ENCODE measurements at regions of chr2 and their contacts with region 1.

Region 1: GRCh38 chr2:179129574-179130238 is 79.8 kb upstream of the CCDC141 start:
- DNase-seq: no peak
- ATAC-seq: peak; percentile 53; the same call in 1 of the 3 replicates
- H3K4me3 ChIP-seq: no peak overlapping the region
- H3K27ac ChIP-seq: no peak overlapping the region
- H3K4me1 ChIP-seq: no peaks in the 10 kb centered on the region
- H3K27me3 ChIP-seq: no peaks in the 10 kb centered on the region
- CTCF ChIP-seq: peak; percentile 65
- EP300 ChIP-seq: no peak
- POLR2A ChIP-seq: no peak
- RAD21 ChIP-seq: no peak

Region 2: GRCh38 chr2:178796079-178796677 is 333.5 kb before region 1 on chr2:
- CTCF ChIA-PET with region 1: no interaction called
- POLR2A ChIA-PET with region 1: no interaction called
- in situ Hi-C with region 1: no loop called
- intact Hi-C with region 1: loop called (anchors 2 kb)
- DNase-seq: peak; percentile 10
- ATAC-seq: no peak
- H3K4me3 ChIP-seq: no peak overlapping the region
- H3K27ac ChIP-seq: no peak overlapping the region
- H3K4me1 ChIP-seq: no peaks in the 10 kb centered on the region
- H3K27me3 ChIP-seq: peaks cover 0 to 23% of the 10 kb centered on the region in 2 experiments; a peak in 2 of 5 replicates
- CTCF ChIP-seq: peak; percentile 22; the same call in 1 of the 2 replicates
- EP300 ChIP-seq: no peak
- POLR2A ChIP-seq: no peak
- RAD21 ChIP-seq: no peak

Region 3: GRCh38 chr2:178891265-178891958 is 238.3 kb before region 1 on chr2:
- CTCF ChIA-PET with region 1: interaction called, 6 read pairs
- POLR2A ChIA-PET with region 1: no interaction called
- in situ Hi-C with region 1: no loop called
- intact Hi-C with region 1: loop called (anchors 1 kb)
- DNase-seq: peak; percentile 39
- ATAC-seq: peak; percentile 87
- H3K4me3 ChIP-seq: no peak overlapping the region
- H3K27ac ChIP-seq: no peak overlapping the region
- H3K4me1 ChIP-seq: no peaks in the 10 kb centered on the region
- H3K27me3 ChIP-seq: no peaks in the 10 kb centered on the region
- CTCF ChIP-seq: peak; percentile 77
- EP300 ChIP-seq: no peak
- POLR2A ChIP-seq: no peak
- RAD21 ChIP-seq: peak; percentile 42; the same call in 1 of the 2 replicates